Right ventricle myocardium inferior (tissue), 1 donor: ENCODE measurements at regions of chr1 and their contacts with region 1.

Region 1: DNA sequence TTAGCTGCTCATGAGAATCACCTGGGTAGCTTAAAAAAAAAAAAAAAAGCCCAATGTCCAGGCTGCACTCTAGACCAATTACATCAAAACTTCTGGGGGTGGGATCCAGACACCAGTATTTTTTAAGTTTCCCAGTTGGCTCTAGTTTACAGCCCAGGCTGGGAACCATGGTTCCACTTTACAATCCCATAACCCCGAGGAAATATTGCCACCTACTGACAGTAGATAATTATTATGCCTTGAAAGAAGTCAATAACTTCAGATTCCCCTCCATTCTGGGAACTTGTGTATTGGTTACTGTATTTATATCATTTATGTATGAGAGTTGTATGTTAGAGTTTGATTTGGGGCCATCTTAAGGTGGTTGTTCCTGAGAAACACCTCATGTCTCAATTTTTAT is 100.2 kb downstream of the SPATA46 start:
- DNase-seq: no peak
- ATAC-seq: no peak

Region 2: GRCh38 chr1:162391790-162392563 is 115.5 kb after region 1 on chr1:
- intact Hi-C with region 1: loop called (anchors 5 kb)
- DNase-seq: no peak
- ATAC-seq: no peak

Region 3: DNA sequence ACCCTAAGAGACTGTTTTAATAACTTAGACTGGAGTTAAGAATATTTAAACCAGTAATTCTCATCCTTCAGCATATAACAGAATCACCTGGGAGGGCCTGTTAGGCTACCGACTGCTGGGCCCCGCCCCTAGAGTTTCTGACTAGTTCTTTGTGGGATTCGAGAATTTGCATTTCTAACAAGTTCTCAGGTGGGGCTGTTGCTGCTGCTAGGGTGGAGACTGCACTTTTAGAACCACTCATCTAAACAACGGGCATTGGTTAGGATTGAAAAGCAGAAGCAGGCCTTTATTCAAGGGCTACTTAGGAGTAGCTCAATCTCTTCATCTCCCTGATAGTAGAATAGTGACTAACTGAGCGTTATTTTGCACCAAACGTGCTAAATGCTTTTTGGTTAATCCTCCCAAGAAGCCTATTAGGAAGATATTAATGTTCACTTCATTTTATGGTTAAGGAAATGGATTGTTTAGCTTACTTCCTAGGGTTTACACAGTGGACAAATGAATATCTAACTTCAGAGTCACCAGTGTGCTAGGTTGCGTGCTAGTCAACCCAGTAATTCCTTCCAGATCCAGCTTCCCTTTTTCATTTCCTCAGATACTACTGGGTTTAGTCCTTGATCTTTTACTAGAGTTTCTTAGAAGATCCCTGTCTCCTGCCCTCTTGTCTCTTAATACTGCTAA is 254.0 kb after region 1 on chr1:
- intact Hi-C with region 1: no loop called
- DNase-seq: no peak
- ATAC-seq: no peak